GM10248 (cell line): ENCODE measurements at regions of chr10 and their contacts with region 1.

Region 1: DNA sequence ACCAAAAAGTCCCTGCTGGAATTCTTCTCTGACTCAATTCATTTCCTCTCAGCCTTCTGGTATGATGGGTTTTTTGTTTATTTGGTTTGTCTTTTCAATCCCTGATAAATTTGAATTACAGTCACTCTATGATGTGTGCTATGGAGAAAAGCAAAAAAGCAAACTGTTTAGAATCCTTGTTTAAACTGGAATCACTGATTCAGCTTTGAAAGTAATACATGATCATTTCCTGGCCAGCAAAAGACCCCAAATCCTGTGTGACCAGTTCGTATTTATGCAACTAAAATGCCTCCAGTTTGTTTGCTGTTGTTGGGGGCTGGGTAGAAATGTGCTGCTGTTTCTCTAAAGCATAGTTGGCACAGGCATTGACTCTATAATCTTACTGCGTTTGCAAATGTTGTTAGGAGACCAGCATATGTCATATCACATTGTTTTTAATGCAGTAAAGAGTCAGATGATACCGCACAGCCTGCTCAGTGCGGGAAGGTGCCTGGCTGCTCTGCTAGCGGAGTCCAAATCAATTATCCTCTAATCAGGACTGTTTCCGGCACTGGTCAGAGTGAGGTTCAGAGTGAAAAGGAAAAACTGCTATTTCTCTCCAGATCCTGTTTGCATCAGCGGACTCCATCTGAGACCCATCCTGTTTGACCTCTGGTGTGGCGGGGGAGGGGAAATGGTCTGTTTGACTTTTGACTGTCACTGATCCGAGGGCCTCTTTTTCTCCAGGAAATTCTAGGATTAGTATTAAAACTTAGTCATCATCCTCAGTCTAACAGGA is 40.6 kb upstream of the ADD3 start:
- DNase-seq: no peak
- CTCF ChIP-seq: no peak

Region 2: DNA sequence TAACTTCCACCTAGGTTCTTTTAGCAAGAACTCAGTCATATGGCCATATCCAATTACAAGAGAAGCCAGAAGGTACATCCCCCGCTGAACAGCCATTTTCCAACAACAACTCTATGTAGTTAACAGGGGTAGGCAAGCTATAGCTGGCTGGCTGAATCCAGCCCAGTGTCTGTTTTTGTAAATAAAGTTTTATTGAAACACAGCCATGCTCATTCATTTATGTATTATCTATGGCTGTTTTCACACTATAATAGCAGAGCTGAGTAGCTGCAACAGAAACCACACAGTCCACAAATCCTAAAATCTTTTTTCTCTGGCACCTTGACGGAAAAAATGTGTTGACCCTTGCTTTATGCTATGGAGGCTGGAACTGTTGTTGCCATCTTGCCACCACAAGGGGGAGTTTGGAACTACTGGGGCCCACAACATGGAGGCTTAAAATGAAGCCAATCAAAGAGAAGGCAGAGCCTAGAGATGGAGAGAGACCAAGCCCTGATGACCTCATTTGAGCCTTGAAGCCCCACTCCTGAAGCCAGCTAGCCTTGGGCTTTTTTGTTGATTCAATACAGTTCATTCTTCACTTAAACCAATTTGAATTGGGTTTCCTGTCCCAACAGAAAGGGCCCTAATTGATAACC is 10.6 kb before region 1 on chr10:
- CTCF ChIA-PET with region 1: interaction called, 13 read pairs
- POLR2A ChIA-PET with region 1: no interaction called
- DNase-seq: peak; percentile 62
- CTCF ChIP-seq: peak; percentile 67

Region 3: DNA sequence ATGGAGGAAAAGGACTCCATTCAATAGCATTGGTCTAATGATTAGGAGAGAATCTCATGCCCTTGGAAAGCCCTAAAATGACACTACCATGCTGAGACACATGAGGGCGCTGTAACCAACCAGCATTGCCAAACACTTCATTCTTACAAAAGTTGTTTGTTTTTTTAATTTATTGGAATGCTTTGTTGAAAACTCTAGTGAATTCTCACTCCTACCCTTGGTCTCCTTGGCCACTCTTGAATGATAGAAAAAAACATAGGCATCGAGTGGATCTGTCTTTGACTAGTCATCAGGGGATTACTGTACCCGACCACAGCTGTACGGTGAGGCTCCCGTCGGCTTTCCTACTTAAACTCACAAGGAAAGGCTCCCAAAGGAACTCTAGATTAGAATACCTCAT is 11.3 kb after region 1 on chr10:
- CTCF ChIA-PET with region 1: interaction called, 24 read pairs
- POLR2A ChIA-PET with region 1: no interaction called
- DNase-seq: peak; percentile 52
- CTCF ChIP-seq: peak; percentile 78

Region 4: GRCh38 chr10:110007701-110008517 is 40.8 kb after region 1 on chr10 and contains the start of gene ADD3:
- CTCF ChIA-PET with region 1: no interaction called
- POLR2A ChIA-PET with region 1: no interaction called
- DNase-seq: peak; percentile 98
- CTCF ChIP-seq: no peak